ENCODE measurements at regions of chr1 and their contacts with region 1.

Region 1: DNA sequence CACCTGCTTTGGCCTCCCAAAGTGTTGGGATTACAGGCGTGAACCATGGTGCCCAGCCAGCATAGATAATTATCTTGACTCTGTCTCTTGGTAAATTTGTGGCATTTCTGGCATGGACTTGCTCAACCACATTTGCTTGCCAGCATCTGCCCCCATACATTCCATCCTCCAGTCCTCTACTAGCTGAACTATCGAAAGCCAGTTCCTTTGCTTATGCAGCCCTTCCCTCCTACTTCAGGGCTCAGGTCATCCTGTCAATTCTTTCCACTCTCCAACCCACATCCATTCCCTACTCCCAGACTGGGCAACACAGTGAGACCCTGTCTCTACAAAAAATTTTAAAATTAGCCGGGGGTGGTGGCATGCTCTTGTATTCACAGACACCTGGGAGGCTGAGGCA is 13.0 kb upstream of the UQCRHL start:
- DNase-seq: no peak
- H3K4me3 ChIP-seq: no peak overlapping the region
- H3K27ac ChIP-seq: no peak overlapping the region
- H3K4me1 ChIP-seq: peaks cover 10% of the 10 kb centered on the region
- CTCF ChIP-seq: no peak

Region 2: DNA sequence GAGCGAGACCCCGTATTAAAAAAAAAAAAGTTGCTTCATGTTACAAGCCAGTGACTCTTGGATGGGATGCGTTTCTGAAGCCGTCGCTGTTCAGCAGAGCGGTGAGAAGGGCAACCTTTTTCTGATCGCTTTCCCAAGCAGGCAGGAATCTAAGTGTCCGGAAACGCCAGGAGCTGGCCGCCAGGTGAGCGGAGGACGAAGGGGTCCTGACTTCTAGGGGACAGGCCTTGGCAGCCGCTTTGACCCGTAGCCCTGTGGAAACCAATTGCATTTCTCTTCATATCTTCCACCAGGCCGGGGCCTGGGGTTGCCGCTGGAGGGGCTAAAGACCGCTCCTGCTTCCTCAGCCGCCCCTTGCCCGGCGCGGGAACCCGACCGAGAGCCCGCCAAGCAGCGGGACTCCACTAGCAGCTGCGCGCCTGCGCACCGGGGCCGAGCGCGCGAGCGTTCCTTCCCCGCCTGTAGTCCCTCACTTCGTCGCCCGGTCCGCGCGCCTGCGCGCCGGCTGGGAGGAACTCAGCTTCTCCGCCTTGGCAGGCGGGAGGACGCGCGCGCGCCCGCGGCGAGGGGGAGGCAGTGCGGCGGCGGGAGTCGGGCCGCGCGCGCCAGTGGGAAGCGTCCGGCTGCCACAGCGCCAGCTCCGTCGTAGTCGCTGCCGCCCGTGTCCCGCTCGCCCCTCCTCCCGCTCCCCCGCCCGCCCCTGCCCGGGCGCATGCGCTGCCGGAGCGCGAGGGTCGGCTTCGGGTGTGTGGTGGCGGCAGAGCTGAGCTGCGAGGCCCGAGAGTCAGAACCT is 26.8 kb after region 1 on chr1 and contains the start of gene SPEN:
- CTCF ChIA-PET with region 1: no interaction called
- POLR2A ChIA-PET with region 1: interaction called, 4 read pairs
- intact Hi-C with region 1: loop called (anchors 2 kb)
- DNase-seq: peak; percentile 98
- H3K4me3 ChIP-seq: peak within 1 kb of the TSS; percentile 87
- H3K27ac ChIP-seq: peak within 1 kb of the TSS; percentile 98
- H3K4me1 ChIP-seq: peaks cover 65% of the 10 kb centered on the region
- CTCF ChIP-seq: no peak
- total RNA-seq, gene SPEN: 40.7 and 41.4 TPM in 2 replicates

Region 3: DNA sequence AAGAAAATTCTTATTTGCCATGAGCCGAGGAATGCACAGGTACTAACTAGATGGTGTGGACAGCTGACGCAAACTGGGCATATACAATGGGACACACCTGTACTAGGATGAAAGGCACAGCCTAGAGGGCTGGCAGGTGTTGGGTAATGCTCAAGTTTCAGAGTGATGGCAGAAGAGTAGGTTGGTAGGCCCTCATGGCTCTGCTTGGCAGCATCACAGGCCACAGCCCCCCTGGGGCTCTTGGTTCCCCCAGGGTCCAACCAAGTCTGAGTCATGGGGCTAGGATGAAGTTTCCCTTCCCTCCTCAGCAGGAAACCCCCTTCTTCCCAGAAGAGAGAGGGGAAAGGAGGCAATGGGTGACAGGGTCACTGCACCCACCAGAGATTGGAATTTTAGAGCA is 62.2 kb after region 1 on chr1:
- CTCF ChIA-PET with region 1: no interaction called
- POLR2A ChIA-PET with region 1: interaction called, 7 read pairs
- intact Hi-C with region 1: loop called (anchors 5 kb)
- DNase-seq: no peak
- H3K4me3 ChIP-seq: no peak overlapping the region
- H3K27ac ChIP-seq: no peak overlapping the region
- H3K4me1 ChIP-seq: peaks cover 33% of the 10 kb centered on the region
- CTCF ChIP-seq: no peak

Region 4: DNA sequence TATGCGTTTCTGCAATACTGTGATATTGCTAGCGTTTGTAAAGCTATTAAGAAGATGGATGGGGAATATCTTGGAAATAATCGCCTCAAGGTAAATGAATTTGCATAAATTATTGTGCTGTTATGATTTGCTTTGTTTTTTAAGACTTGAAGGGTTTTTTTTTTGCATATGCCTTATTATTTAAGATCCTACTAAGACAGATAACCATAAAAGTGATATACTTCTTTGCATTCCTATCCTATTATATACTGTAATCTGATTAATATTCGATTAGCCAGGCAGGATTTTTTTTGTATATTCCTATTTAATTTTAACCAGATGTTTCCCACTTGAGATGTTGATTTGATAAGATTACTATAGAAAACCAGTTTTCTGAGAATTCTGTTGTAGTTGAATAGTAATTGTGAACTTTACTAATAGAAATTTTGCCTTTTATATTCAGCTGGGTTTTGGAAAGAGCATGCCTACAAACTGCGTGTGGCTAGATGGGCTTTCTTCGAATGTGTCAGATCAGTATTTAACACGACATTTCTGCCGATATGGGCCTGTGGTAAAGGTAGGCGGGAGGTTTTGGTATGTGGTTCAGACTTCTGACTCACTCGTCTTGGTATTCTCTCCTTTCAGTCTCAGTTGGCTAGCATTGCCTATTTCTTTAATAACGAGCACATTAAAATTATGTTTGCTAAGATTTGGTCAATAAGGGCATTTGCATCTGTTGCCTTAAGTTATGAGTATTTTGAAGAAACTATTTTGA is 98.7 kb after region 1 on chr1:
- CTCF ChIA-PET with region 1: no interaction called
- POLR2A ChIA-PET with region 1: no interaction called
- intact Hi-C with region 1: loop called (anchors 5 kb)
- DNase-seq: no peak
- H3K4me3 ChIP-seq: no peak overlapping the region
- H3K27ac ChIP-seq: no peak overlapping the region
- H3K4me1 ChIP-seq: no peaks in the 10 kb centered on the region
- CTCF ChIP-seq: no peak

Region 5: DNA sequence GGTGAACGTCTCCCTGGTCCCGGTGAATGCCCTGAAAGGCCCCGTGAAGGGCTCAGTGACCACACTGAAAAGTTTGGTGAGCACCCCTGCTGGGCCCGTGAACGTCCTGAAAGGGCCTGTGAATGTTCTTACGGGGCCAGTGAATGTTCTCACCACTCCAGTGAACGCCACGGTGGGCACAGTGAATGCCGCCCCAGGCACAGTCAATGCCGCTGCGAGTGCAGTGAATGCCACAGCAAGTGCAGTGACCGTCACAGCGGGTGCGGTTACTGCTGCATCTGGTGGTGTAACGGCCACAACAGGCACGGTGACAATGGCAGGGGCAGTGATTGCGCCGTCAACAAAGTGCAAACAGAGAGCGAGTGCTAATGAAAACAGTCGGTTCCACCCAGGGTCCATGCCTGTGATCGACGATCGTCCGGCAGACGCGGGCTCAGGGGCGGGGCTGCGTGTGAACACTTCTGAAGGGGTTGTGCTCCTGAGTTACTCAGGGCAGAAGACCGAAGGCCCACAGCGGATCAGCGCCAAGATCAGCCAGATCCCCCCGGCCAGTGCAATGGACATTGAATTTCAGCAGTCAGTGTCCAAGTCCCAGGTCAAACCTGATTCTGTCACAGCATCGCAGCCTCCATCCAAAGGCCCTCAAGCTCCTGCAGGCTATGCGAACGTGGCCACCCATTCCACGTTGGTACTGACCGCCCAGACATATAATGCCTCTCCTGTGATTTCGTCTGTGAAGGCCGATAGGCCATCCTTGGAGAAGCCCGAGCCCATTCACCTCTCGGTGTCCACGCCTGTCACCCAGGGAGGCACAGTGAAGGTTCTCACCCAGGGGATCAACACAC is 114.0 kb after region 1 on chr1:
- CTCF ChIA-PET with region 1: no interaction called
- POLR2A ChIA-PET with region 1: no interaction called
- intact Hi-C with region 1: loop called (anchors 5 kb)
- DNase-seq: no peak
- H3K4me3 ChIP-seq: no peak overlapping the region
- H3K27ac ChIP-seq: no peak overlapping the region
- H3K4me1 ChIP-seq: no peaks in the 10 kb centered on the region
- CTCF ChIP-seq: no peak

Region 6: GRCh38 chr1:15994590-15995351 is 174.3 kb after region 1 on chr1:
- CTCF ChIA-PET with region 1: no interaction called
- POLR2A ChIA-PET with region 1: no interaction called
- intact Hi-C with region 1: loop called (anchors 5 kb)
- DNase-seq: peak; percentile 49
- H3K4me3 ChIP-seq: no peak overlapping the region
- H3K27ac ChIP-seq: no peak overlapping the region
- H3K4me1 ChIP-seq: no peaks in the 10 kb centered on the region
- CTCF ChIP-seq: peak; percentile 63

Region 7: GRCh38 chr1:16017461-16018303 is 197.2 kb after region 1 on chr1 and contains the start of gene HSPB7:
- CTCF ChIA-PET with region 1: no interaction called
- POLR2A ChIA-PET with region 1: no interaction called
- intact Hi-C with region 1: no loop called
- DNase-seq: peak; percentile 33
- H3K4me3 ChIP-seq: no peak within 1 kb of the TSS
- H3K27ac ChIP-seq: no peak within 1 kb of the TSS
- H3K4me1 ChIP-seq: peaks cover 17% of the 10 kb centered on the region
- CTCF ChIP-seq: peak; percentile 41
- total RNA-seq, gene HSPB7: not detected in 2 replicates